WTC11 (cell line): ENCODE measurements at regions of chr19 and their contacts with region 1.

Region 1: GRCh38 chr19:33778089-33778791 is 18.4 kb upstream of the KCTD15 start:
- DNase-seq: peak; percentile 85
- ATAC-seq: peak; percentile 82
- H3K4me3 Mint-ChIP-seq: peak overlapping the region; percentile 51
- H3K27ac Mint-ChIP-seq: no peak overlapping the region
- H3K4me1 Mint-ChIP-seq: peaks cover 16% of the 10 kb centered on the region
- H3K27me3 Mint-ChIP-seq: peaks cover 12% of the 10 kb centered on the region
- CTCF ChIP-seq: peak; percentile 100

Region 2: DNA sequence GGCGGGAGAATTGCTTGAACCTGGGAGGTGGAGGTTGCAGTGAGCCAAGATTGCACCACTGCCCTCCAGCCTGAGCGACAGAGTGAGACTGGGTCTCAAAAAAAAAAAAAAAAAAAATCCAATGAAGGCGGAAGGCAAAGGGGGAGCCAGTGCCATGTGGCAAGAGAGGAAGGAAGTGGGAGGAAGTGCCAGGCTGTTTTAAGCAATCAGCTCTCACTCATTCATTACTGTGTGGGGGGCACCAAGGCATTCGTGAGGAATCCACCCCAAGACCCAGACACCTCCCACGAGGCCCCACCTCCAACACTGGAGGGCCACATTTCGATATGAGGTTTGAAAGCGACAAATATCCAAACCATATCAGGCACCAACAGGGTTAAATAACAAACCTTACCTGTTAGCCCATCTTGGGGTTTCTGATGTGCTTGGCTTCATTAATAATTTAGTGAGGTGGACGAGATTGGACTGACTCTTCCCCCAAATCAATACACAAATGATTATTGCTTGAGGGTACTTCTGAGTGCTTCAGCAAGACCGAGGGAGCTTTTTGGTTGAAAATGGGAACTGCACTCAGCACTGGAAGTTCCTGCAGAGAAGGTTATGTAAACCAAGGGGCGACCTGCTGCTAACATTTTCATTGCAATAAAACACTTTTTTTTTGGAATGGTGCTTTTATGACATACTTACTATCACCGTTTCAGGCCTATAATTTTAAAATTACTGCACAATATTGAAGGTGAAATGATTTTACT is 591.6 kb before region 1 on chr19:
- CTCF ChIA-PET with region 1: interaction called, 11 read pairs
- POLR2A ChIA-PET with region 1: no interaction called
- DNase-seq: peak; percentile 1
- ATAC-seq: no peak
- H3K4me3 Mint-ChIP-seq: peak overlapping the region; percentile 47
- H3K27ac Mint-ChIP-seq: no peak overlapping the region
- H3K4me1 Mint-ChIP-seq: peaks cover 15% of the 10 kb centered on the region
- H3K27me3 Mint-ChIP-seq: peaks cover 9% of the 10 kb centered on the region
- CTCF ChIP-seq: no peak

Region 3: GRCh38 chr19:33660410-33661124 is 117.7 kb before region 1 on chr19:
- CTCF ChIA-PET with region 1: no interaction called
- POLR2A ChIA-PET with region 1: no interaction called
- DNase-seq: peak; percentile 23
- ATAC-seq: peak; percentile 72
- H3K4me3 Mint-ChIP-seq: no peak overlapping the region
- H3K27ac Mint-ChIP-seq: peak overlapping the region; percentile 94
- H3K4me1 Mint-ChIP-seq: peaks cover 21% of the 10 kb centered on the region
- H3K27me3 Mint-ChIP-seq: no peaks in the 10 kb centered on the region
- CTCF ChIP-seq: no peak

Region 4: DNA sequence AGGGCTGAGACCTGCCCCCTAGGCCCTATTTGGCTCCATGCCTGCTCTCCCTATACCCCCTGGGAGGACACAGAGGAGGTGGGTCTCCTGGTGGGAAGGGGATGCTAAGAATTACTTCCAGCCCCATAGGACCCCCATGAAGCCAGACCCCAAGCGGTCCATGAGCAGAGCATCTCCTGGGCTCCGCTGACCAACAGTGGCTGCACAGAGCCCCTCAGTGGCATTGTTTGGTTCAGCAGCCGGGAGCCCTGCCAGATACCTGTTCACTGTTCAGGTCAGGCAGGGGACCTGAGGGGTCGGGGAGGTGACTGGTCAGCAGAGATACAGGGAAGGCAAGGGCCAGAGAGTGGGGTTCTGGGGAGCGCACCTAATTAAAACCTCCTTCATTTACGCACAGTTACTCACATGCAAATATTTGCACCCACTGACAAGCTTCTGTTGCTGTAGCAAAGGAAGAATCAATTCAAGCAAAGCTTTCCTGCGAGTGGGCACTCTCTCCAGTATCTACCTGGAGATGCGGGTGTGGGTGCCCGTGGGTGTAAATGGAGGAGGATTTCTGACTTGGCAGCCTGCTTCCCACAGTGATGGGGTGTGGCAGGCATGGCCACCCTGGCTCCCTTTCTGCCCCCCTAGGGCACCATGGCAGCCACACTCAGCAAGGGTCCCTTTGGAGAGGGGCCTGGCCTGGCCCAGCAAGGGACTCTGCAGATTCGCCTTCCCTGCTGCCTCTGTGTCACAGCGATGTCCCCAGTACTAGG is 73.0 kb before region 1 on chr19:
- CTCF ChIA-PET with region 1: no interaction called
- POLR2A ChIA-PET with region 1: no interaction called
- DNase-seq: peak; percentile 53
- ATAC-seq: peak; percentile 63; the same call in 1 of the 2 replicates
- H3K4me3 Mint-ChIP-seq: no peak overlapping the region
- H3K27ac Mint-ChIP-seq: no peak overlapping the region
- H3K4me1 Mint-ChIP-seq: peaks cover 38% of the 10 kb centered on the region
- H3K27me3 Mint-ChIP-seq: no peaks in the 10 kb centered on the region
- CTCF ChIP-seq: no peak

Region 5: DNA sequence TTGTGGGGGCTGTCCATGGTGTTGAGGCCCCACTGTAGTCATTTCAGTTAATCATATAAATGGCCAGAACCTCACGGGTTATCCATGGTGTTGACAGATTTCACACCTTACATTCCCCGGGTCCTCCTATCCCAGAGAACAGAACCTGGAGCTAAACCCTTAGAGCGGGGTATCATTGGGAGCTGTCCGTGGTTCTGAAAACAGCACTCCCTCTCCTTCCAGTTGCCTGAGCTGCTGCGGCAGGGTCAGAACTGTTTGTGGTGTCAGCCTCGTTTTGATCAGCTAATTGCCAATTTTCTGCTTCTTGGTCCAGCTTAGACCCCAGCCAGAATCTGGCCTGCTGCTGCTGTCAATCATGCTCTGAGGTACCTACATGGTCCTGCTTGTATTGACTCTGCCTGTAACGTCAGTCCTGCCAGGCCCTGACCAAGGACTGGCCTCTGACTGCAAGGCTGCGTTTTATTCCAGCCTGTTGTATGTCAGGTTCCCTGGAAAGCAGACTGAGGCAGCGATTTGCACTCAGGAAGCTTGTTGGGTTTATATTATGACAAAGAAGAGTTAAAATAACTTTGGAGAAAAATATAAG is 37.3 kb before region 1 on chr19:
- CTCF ChIA-PET with region 1: interaction called, 10 read pairs
- POLR2A ChIA-PET with region 1: no interaction called
- DNase-seq: peak; percentile 81
- ATAC-seq: peak; percentile 79
- H3K4me3 Mint-ChIP-seq: no peak overlapping the region
- H3K27ac Mint-ChIP-seq: no peak overlapping the region
- H3K4me1 Mint-ChIP-seq: peaks cover 13% of the 10 kb centered on the region
- H3K27me3 Mint-ChIP-seq: no peaks in the 10 kb centered on the region; the same call in 1 of the 2 replicates
- CTCF ChIP-seq: no peak

Region 6: DNA sequence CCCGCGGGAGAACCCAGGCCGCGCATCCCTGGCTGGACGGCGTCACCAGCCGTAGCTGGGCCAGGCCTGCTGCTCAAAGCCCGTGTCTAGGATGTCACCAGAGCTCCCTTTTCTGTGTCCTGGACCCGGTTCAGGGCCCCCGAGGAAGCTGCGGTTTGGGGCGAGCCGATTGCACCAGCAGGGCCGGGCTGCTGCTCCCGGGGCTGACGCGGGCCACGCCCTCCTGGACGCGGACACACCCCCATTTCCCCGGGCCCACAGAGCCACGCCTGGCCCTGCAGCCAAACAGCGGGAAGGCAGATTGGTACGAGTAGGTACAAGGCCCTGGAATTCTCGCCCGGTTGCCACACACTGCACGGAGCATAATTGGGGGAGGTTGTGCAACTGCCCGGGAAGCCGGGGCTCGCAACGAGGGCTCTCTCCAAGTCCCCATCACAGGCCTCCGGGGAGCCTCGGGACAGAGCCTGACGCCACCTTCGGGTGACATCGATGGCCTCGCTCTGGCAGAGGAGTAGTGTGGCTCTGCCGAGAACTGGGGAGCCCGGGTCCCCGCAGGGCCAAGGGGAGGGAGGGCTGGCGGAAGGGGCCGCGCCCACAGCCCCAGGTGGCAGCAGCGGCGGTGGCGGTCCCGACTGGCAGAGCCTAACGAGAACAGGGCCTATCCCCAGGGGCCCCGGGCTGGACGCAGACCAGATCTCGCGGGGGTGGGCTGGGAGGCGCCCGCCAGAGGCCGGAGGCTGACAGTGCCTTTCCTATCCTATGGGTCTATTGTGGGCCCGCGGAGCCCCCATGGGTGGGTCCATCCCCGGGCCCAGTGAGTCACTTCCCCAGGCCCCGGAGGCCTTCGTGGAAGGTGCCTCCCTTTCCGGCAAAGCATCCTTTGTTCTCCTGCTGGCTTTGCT is 41.9 kb after region 1 on chr19:
- CTCF ChIA-PET with region 1: interaction called, 12 read pairs
- POLR2A ChIA-PET with region 1: no interaction called
- DNase-seq: peak; percentile 83
- ATAC-seq: peak; percentile 86
- H3K4me3 Mint-ChIP-seq: peak overlapping the region; percentile 73
- H3K27ac Mint-ChIP-seq: no peak overlapping the region
- H3K4me1 Mint-ChIP-seq: peaks cover 13% of the 10 kb centered on the region
- H3K27me3 Mint-ChIP-seq: peaks cover 12% of the 10 kb centered on the region
- CTCF ChIP-seq: no peak

Region 7: DNA sequence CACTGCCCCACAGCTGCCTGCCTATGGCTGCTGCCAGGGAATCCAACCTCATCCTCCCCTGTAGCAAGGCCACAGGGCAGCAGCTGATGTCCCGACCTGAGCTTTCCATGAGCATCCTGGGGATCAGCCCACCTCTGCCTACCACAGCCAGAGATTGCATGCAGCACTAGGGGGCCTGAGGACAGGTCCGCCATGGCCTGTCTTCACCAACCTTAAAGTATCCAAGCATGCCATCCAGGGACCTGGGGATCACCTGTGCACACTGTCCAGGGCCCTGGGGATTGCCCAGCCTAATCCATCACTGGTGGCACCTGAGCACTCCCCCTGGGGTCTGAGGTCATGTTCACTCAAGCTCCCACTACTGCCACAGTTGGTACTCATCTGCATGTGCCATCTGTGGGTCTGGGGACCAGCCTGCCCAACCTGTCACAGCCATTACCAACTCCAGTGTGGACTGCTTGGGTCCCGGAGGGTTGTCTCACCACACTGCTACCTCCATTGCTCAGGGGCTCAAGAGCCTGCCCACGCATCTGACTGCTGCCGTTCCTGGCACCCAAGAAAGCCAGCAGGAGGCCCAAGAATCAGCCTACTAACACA is 71.4 kb after region 1 on chr19:
- CTCF ChIA-PET with region 1: no interaction called
- POLR2A ChIA-PET with region 1: no interaction called
- DNase-seq: no peak
- ATAC-seq: no peak
- H3K4me3 Mint-ChIP-seq: no peak overlapping the region
- H3K27ac Mint-ChIP-seq: no peak overlapping the region
- H3K4me1 Mint-ChIP-seq: no peaks in the 10 kb centered on the region
- H3K27me3 Mint-ChIP-seq: no peaks in the 10 kb centered on the region
- CTCF ChIP-seq: no peak

Region 8: DNA sequence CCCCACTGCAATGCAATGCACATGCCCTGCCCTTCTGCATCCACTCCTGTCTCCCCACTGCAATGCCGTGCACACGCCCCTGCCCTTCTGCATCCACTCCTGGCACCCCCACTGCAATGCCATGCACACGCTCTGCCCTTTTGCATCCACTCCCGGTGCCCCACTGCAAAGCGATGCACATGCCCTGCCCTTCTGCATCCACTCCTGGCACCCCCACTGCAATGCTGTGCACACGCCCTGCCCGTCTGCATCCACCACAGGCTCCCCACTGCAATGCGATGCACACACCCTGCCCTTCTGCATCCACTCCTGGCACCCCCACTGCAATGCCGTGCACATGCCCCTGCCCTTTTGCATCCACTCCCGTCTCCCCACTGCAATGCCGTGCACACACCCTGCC is 116.5 kb after region 1 on chr19:
- CTCF ChIA-PET with region 1: no interaction called
- POLR2A ChIA-PET with region 1: no interaction called
- DNase-seq: no peak
- ATAC-seq: no peak
- H3K4me3 Mint-ChIP-seq: no peak overlapping the region
- H3K27ac Mint-ChIP-seq: no peak overlapping the region
- H3K4me1 Mint-ChIP-seq: no peaks in the 10 kb centered on the region
- H3K27me3 Mint-ChIP-seq: peaks cover 6% of the 10 kb centered on the region
- CTCF ChIP-seq: no peak

Region 9: DNA sequence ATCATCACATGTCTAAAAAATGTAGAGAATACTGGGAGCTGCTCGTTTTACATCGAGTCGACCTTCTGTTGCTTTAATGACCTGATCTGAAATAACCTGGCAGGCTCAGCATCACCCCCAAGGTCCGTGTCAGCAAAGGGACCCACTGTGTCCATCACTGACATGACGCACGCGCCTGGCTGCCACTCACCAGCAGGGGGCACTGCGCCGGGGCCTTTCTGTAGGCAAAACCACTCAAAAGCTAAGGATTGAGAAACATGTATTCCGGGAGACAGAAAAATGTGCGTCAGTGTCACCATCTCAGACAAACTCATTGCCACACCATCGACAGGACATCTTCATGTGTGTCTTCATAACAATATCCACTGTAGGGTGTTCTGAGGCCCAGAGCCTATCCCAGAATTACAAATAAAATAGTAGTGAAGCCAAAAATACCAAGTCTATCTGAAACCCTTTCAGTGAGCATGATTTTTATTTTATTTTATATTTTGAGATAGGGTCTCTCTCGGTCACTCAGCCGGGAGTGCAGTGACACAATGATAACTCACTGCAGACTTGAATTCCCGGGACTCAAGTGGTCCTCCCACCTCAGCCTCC is 263.8 kb after region 1 on chr19:
- CTCF ChIA-PET with region 1: interaction called, 22 read pairs
- POLR2A ChIA-PET with region 1: no interaction called
- DNase-seq: peak; percentile 91
- ATAC-seq: peak; percentile 72
- H3K4me3 Mint-ChIP-seq: no peak overlapping the region
- H3K27ac Mint-ChIP-seq: no peak overlapping the region
- H3K4me1 Mint-ChIP-seq: no peaks in the 10 kb centered on the region
- H3K27me3 Mint-ChIP-seq: no peaks in the 10 kb centered on the region; the same call in 1 of the 2 replicates
- CTCF ChIP-seq: peak; percentile 93

Region 10: GRCh38 chr19:34096020-34096915 is 318.0 kb after region 1 on chr19:
- CTCF ChIA-PET with region 1: interaction called, 131 read pairs
- POLR2A ChIA-PET with region 1: no interaction called
- DNase-seq: peak; percentile 16
- ATAC-seq: peak; percentile 76
- H3K4me3 Mint-ChIP-seq: peak overlapping the region; percentile 56
- H3K27ac Mint-ChIP-seq: no peak overlapping the region; the same call in 1 of the 2 replicates
- H3K4me1 Mint-ChIP-seq: peaks cover 11% of the 10 kb centered on the region; the same call in 1 of the 2 replicates
- H3K27me3 Mint-ChIP-seq: no peaks in the 10 kb centered on the region
- CTCF ChIP-seq: peak; percentile 62

Region 11: GRCh38 chr19:34145741-34146202 is 367.5 kb after region 1 on chr19:
- CTCF ChIA-PET with region 1: interaction called, 89 read pairs
- POLR2A ChIA-PET with region 1: no interaction called
- DNase-seq: peak; percentile 49
- ATAC-seq: peak; percentile 84
- H3K4me3 Mint-ChIP-seq: no peak overlapping the region
- H3K27ac Mint-ChIP-seq: no peak overlapping the region
- H3K4me1 Mint-ChIP-seq: peaks cover 10% of the 10 kb centered on the region; the same call in 1 of the 2 replicates
- H3K27me3 Mint-ChIP-seq: no peaks in the 10 kb centered on the region
- CTCF ChIP-seq: peak; percentile 78